Activated B cell treated with CpG ODN at 0.5 μM for 24 hours (primary cell): ENCODE measurements at regions of chr18 and their contacts with region 1.

Region 1: GRCh38 chr18:35158728-35159450 is 81.9 kb upstream of the ZNF397 start:
- DNase-seq: no peak
- ATAC-seq: peak; percentile 91
- H3K4me3 Mint-ChIP-seq: peak overlapping the region; percentile 73
- H3K27ac Mint-ChIP-seq: peak overlapping the region; percentile 97
- H3K4me1 Mint-ChIP-seq: peaks cover 31% of the 10 kb centered on the region
- H3K27me3 Mint-ChIP-seq: no peaks in the 10 kb centered on the region
- CTCF ChIP-seq: no peak

Region 2: DNA sequence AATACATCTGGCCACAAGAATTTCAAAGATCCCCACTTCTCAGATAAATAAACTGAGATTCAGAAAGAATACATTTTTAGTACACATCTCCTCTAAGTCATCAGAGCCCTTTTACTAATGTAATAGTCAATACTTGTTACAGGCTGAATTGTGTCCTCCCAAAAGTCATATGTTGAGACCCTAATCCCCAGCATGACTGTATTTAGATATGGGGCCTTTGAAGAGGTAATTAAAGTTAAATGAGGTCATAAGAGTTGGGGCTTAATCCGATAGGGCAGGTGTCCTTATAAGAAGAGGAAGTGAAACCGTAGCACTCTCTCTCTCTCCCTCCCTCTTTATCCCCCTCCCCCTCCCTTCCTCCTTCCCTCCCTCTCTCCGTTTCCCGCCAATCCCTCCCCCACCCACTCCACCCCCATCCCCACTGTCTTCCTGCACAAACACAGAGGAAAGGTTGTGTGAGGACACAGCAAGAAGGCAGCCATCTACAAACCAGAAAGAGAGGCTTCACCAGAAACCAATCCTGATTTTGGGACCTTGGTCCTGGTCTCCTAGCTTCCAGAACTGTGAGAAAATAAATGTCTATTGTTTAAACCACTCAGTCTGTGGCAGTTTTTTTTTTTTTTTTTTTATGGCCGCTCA is 15.3 kb after region 1 on chr18:
- CTCF ChIA-PET with region 1: no interaction called
- POLR2A ChIA-PET with region 1: interaction called, 4 read pairs
- intact Hi-C with region 1: loop called (anchors 1 kb)
- DNase-seq: no peak
- ATAC-seq: peak; percentile 95
- H3K4me3 Mint-ChIP-seq: peak overlapping the region; percentile 55
- H3K27ac Mint-ChIP-seq: peak overlapping the region; percentile 79
- H3K4me1 Mint-ChIP-seq: peaks cover 26% of the 10 kb centered on the region
- H3K27me3 Mint-ChIP-seq: no peaks in the 10 kb centered on the region
- CTCF ChIP-seq: no peak